ENCODE measurements at regions of chr13 and their contacts with region 1.

Region 1: GRCh38 chr13:77619655-77620054 is 77.8 kb upstream of the SLAIN1 start:
- DNase-seq: no peak

Region 2: GRCh38 chr13:77583581-77583980 is 36.1 kb before region 1 on chr13:
- intact Hi-C with region 1: loop called in 1 of 2 experiments (anchors 1 kb)
- DNase-seq: no peak

Measured in posterior vena cava (tissue), 2 donors.